CD8-positive, alpha-beta T cell (primary cell): ENCODE measurements at regions of chr12 and their contacts with region 1.

Region 1: DNA sequence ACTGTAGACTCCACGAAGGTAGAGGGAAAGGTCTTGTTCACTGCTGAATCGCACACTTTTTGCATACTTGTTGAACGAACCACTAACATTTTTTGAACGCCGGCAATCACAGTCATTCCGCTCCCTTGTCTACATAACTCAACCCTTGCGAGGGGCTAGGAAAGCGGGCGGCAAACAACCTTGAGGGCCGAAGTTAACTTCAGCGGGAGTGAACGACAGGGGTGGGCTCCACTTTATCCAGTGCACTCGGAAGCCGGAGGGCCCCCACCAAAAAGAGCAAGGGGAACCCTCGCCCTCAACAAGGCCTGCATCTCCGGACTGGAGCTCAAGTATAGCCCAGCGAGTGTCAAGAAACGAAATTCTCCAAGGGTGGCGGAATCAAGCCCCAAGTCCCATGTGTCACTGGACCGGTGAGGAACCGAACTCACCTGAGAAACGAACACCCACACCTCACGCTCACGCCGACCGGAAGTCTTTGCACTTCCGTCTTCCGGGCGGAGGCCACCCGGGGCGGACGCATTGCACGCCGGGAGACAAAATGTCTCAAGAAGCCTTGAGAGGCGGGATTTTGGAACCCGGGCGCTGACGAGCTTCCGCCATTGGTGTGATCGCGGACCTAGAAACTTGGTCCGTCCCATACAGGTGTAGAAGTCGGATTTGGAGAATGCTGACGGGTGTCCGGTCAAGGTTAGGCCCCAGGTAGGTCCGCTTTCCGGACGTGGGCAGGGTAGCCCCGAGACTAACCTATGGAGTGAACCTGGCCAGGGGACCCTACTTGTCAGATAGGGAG is at the start of gene LLPH:
- DNase-seq: peak; percentile 75 to 94 (median 89)
- ATAC-seq: peak; percentile 92
- H3K4me3 ChIP-seq: peak within 1 kb of the TSS; percentile 91 to 97
- H3K4me3 Mint-ChIP-seq: peak within 1 kb of the TSS; percentile 96
- H3K27ac ChIP-seq: peak within 1 kb of the TSS; percentile 86 to 91
- H3K27ac Mint-ChIP-seq: peak within 1 kb of the TSS; percentile 99
- H3K4me1 ChIP-seq: peaks cover 22% of the 10 kb centered on the region
- H3K4me1 Mint-ChIP-seq: peaks cover 59% of the 10 kb centered on the region
- H3K27me3 ChIP-seq: no peaks in the 10 kb centered on the region
- H3K27me3 Mint-ChIP-seq: no peaks in the 10 kb centered on the region
- CTCF ChIP-seq: no peak
- total RNA-seq, gene LLPH: 29.1 to 30.9 TPM

Region 2: DNA sequence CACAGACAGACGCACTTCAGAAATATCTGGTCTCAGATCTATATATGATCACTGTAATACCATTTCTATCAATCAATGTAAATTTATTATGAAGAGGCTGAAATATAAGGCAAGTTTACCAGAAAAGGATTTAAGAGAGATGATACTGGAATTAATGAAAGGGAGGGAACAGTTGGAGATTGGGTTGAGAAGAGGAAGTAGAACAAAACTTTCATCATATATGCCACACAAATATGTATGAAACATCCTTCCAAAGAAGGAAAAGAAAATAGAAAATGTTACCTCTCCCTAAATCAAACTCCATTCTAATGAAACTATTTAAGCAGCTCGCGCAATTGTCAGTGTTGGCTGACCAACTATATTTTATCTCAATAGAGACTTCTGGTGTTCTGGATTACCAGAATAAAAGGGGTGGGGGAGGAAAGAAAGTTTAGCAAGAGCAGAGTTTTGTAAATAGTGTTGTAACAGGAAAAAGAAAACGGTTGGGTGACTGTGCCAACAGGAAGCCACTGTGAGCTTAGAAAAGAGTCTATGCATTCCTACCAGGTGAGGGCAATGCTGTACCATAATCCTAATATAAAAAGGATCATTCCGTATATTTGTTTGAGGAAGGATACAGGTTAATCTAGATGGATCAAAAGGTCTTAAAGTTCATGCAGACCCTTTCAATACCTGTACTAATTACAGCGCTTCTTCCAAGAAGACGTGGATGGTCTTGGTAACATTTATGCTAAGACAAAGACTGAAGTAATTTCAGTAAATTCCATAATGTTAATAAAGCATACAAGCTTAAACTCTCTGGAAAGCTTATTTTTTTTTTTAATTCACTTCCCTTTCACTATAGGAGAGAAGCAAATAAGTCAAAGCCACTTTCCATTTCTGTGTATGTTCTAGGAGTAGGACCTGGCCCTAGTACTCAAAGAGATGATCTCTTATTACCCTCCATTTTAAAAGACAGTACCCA is 14.6 kb after region 1 on chr12:
- CTCF ChIA-PET with region 1: interaction called, 3 read pairs
- POLR2A ChIA-PET with region 1: interaction called, 13 read pairs
- intact Hi-C with region 1: no loop called
- DNase-seq: peak in 2 of 9 experiments; percentile 19 to 42
- ATAC-seq: no peak
- H3K4me3 ChIP-seq: no peak overlapping the region
- H3K4me3 Mint-ChIP-seq: no peak overlapping the region
- H3K27ac ChIP-seq: no peak overlapping the region
- H3K27ac Mint-ChIP-seq: peak overlapping the region; percentile 82
- H3K4me1 ChIP-seq: no peaks in the 10 kb centered on the region
- H3K4me1 Mint-ChIP-seq: peaks cover 21% of the 10 kb centered on the region
- H3K27me3 ChIP-seq: no peaks in the 10 kb centered on the region
- H3K27me3 Mint-ChIP-seq: no peaks in the 10 kb centered on the region
- CTCF ChIP-seq: peak; percentile 35

Region 3: GRCh38 chr12:66169221-66170170 is 39.0 kb after region 1 on chr12 and contains the start of gene TMBIM4:
- CTCF ChIA-PET with region 1: interaction called, 4 read pairs
- POLR2A ChIA-PET with region 1: interaction called, 38 read pairs
- intact Hi-C with region 1: loop called (anchors 1 kb)
- DNase-seq: peak; percentile 62 to 93 (median 84)
- ATAC-seq: peak; percentile 79
- H3K4me3 ChIP-seq: peak within 1 kb of the TSS; percentile 93 to 96
- H3K4me3 Mint-ChIP-seq: peak within 1 kb of the TSS; percentile 95
- H3K27ac ChIP-seq: peak within 1 kb of the TSS; percentile 97
- H3K27ac Mint-ChIP-seq: peak within 1 kb of the TSS; percentile 99
- H3K4me1 ChIP-seq: peaks cover 17% of the 10 kb centered on the region
- H3K4me1 Mint-ChIP-seq: peaks cover 51% of the 10 kb centered on the region
- H3K27me3 ChIP-seq: no peaks in the 10 kb centered on the region
- H3K27me3 Mint-ChIP-seq: peaks cover 2% of the 10 kb centered on the region
- CTCF ChIP-seq: peak; percentile 34
- total RNA-seq, gene TMBIM4: 22.4 to 22.7 TPM

Region 4: DNA sequence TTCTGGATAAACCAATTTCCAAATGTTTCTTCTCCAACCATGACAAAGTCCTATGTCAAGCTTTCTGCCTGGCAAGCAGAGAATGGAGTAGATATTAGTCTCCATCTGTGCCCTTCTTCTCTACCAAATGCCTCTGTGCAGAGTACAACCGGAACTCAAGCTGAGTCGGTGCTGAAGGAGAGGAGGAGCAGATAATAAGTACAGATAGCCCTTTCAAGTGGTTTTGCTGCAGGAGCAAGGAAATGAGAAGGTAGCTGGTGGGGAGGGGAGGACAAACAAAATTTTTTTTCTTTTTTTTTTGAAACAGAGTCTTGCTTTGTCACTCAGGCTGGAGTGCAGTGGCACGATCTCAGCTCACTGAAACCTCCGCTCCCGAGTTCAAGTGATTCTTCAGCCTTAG is 157.6 kb after region 1 on chr12:
- CTCF ChIA-PET with region 1: no interaction called
- POLR2A ChIA-PET with region 1: no interaction called
- intact Hi-C with region 1: loop called (anchors 5 kb)
- DNase-seq: peak in 8 of 9 experiments; percentile 38 to 91 (median 68)
- ATAC-seq: peak; percentile 98
- H3K4me3 ChIP-seq: peak overlapping the region in 1 of 2 experiments; percentile 33
- H3K4me3 Mint-ChIP-seq: peak overlapping the region; percentile 72
- H3K27ac ChIP-seq: peak overlapping the region in 1 of 2 experiments; percentile 9
- H3K27ac Mint-ChIP-seq: peak overlapping the region; percentile 83
- H3K4me1 ChIP-seq: peaks cover 77% of the 10 kb centered on the region
- H3K4me1 Mint-ChIP-seq: peaks cover 80% of the 10 kb centered on the region
- H3K27me3 ChIP-seq: no peaks in the 10 kb centered on the region
- H3K27me3 Mint-ChIP-seq: no peaks in the 10 kb centered on the region
- CTCF ChIP-seq: no peak